HepG2 (cell line): ENCODE measurements at regions of chr16 and their contacts with region 1.

Region 1: DNA sequence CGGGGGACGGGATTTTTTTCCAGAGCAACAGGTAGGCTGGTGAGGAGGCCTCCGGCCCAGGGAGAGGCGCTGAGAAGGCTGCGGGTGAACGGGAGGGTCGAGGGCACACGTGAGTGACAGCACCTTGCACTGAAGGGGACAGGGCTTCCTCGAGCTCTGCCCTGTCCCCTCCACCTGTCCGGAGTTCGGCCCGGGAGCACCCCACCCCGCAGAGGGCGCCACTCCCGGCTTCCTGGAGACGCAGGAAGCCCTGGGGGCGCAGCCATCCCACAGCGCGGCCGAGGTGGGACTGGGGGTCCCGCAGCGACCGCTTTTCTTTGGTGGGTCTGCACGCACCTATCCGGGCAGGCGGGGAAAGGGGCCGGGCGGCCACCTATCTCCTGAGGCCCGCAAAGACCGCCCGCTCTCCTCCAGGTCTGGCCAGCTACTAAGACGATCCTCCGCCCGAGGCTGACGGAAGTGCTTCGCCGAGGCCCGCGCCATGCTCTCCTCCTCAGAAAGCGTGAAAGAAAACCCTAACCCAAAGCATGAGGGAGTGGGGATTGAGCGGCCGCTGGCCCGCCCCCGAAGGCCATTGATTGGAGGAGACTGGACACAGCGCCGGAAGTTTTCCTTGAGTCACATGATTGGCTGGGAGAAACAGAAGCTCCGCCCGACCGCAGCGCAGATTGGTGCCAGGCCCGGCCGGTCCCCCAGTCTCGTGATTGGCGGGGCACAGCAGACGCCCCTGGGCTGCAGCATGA is 34.3 kb downstream of the DDX19A start:
- DNase-seq: peak; percentile 98
- ATAC-seq: peak; percentile 91
- H3K4me3 ChIP-seq: peak overlapping the region; percentile 80 to 94 (median 85)
- H3K27ac ChIP-seq: peak overlapping the region; percentile 78
- H3K4me1 ChIP-seq: peaks cover 24% of the 10 kb centered on the region
- H3K27me3 ChIP-seq: no peaks in the 10 kb centered on the region; a peak in 1 of 5 replicates
- CTCF ChIP-seq: peak; percentile 73
- EP300 ChIP-seq: 0 out of 4 replicates have a peak, but pooled peaks of 1 of the 2 experiments have one; percentile 4
- POLR2A ChIP-seq: peak; percentile 92 to 95
- RAD21 ChIP-seq: peak; percentile 84

Region 2: GRCh38 chr16:70289229-70290098 is 91.6 kb before region 1 on chr16 and contains the start of gene AARS1:
- CTCF ChIA-PET with region 1: no interaction called
- POLR2A ChIA-PET with region 1: interaction called, 10 read pairs
- in situ Hi-C with region 1: no loop called
- intact Hi-C with region 1: no loop called
- DNase-seq: peak; percentile 100
- ATAC-seq: peak; percentile 99
- H3K4me3 ChIP-seq: peak within 1 kb of the TSS; percentile 90 to 100 (median 94)
- H3K27ac ChIP-seq: peak within 1 kb of the TSS; percentile 99
- H3K4me1 ChIP-seq: peaks cover 28% of the 10 kb centered on the region
- H3K27me3 ChIP-seq: no peaks in the 10 kb centered on the region; a peak in 1 of 5 replicates
- CTCF ChIP-seq: peak; percentile 16; the same call in 1 of the 2 replicates
- EP300 ChIP-seq: peak; percentile 50 to 63; a peak in 2 of 4 replicates
- POLR2A ChIP-seq: peak; percentile 98
- RAD21 ChIP-seq: peak; percentile 79
- total RNA-seq, gene AARS1: 107 and 132 TPM in 2 replicates

Region 3: GRCh38 chr16:70364399-70364798 is 16.6 kb before region 1 on chr16:
- CTCF ChIA-PET with region 1: no interaction called
- POLR2A ChIA-PET with region 1: interaction called, 14 read pairs
- in situ Hi-C with region 1: no loop called
- intact Hi-C with region 1: no loop called
- DNase-seq: no peak
- ATAC-seq: peak; percentile 23; the same call in 1 of the 3 replicates
- H3K4me3 ChIP-seq: no peak overlapping the region
- H3K27ac ChIP-seq: no peak overlapping the region
- H3K4me1 ChIP-seq: no peaks in the 10 kb centered on the region
- H3K27me3 ChIP-seq: no peaks in the 10 kb centered on the region
- CTCF ChIP-seq: no peak
- EP300 ChIP-seq: no peak
- POLR2A ChIP-seq: no peak
- RAD21 ChIP-seq: no peak

Region 4: GRCh38 chr16:70428178-70428998 is 47.4 kb after region 1 on chr16:
- CTCF ChIA-PET with region 1: no interaction called
- POLR2A ChIA-PET with region 1: interaction called, 47 read pairs
- in situ Hi-C with region 1: no loop called
- intact Hi-C with region 1: no loop called
- DNase-seq: peak; percentile 100
- ATAC-seq: peak; percentile 90
- H3K4me3 ChIP-seq: peak overlapping the region; percentile 15 to 64 (median 47)
- H3K27ac ChIP-seq: peak overlapping the region; percentile 96
- H3K4me1 ChIP-seq: peaks cover 90% of the 10 kb centered on the region
- H3K27me3 ChIP-seq: no peaks in the 10 kb centered on the region
- CTCF ChIP-seq: no peak
- EP300 ChIP-seq: peak; percentile 88 to 97
- POLR2A ChIP-seq: peak; percentile 74 to 75
- RAD21 ChIP-seq: peak; percentile 68

Region 5: DNA sequence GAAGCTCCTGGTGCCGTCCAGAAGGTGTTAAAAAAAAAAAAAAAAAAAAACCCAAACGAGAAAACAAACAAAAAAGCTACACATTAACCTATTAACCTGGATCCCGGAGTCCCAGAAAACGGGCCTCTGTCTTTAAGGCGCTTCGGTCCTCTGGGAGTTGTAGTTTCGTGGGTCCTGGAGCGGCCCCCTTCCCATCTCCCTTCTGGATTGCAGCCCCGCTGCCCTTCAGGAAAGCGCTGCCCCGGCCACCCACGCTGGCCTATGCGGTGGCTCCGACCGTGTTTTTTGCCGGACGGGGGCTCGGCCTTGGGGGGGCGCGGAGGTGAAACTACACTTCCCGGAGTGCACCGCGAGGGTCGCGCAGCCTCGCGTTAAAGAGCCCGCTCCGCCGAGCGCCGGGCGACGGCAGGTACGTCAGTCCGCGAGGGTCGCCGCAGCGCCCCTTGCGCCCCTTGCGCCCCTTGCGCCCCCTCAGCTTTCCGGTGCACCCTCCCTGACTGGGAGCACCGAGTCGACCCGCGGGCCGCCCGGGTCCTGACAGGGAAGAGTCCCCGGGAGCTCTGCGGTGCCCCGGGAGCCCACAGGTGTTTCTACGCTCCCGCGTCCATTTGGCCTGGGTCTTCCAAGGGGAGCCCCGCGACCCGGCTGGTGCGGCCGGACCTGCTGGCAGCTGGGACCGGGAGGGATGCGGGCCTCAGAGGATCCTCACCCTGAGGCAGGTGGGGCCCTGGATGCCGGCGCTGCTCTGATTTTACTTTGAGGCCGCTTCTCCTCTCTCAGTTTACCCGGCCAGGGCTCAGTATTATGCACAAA is 73.4 kb after region 1 on chr16 and contains the start of gene FCSK:
- CTCF ChIA-PET with region 1: interaction called, 3 read pairs
- POLR2A ChIA-PET with region 1: interaction called, 96 read pairs
- in situ Hi-C with region 1: no loop called
- intact Hi-C with region 1: loop called (anchors 5 kb)
- DNase-seq: peak; percentile 88
- ATAC-seq: peak; percentile 93
- H3K4me3 ChIP-seq: peak within 1 kb of the TSS; percentile 88 to 90 (median 89)
- H3K27ac ChIP-seq: peak within 1 kb of the TSS; percentile 97
- H3K4me1 ChIP-seq: peaks cover 45% of the 10 kb centered on the region
- H3K27me3 ChIP-seq: no peaks in the 10 kb centered on the region; a peak in 1 of 5 replicates
- CTCF ChIP-seq: peak; percentile 73
- EP300 ChIP-seq: peak in 1 of 2 experiments; percentile 70; a peak in 1 of 4 replicates
- POLR2A ChIP-seq: peak in 1 of 2 experiments; percentile 82; a peak in 3 of 4 replicates
- RAD21 ChIP-seq: peak; percentile 81
- total RNA-seq, gene FCSK: 4.9 and 9.1 TPM in 2 replicates

Region 6: DNA sequence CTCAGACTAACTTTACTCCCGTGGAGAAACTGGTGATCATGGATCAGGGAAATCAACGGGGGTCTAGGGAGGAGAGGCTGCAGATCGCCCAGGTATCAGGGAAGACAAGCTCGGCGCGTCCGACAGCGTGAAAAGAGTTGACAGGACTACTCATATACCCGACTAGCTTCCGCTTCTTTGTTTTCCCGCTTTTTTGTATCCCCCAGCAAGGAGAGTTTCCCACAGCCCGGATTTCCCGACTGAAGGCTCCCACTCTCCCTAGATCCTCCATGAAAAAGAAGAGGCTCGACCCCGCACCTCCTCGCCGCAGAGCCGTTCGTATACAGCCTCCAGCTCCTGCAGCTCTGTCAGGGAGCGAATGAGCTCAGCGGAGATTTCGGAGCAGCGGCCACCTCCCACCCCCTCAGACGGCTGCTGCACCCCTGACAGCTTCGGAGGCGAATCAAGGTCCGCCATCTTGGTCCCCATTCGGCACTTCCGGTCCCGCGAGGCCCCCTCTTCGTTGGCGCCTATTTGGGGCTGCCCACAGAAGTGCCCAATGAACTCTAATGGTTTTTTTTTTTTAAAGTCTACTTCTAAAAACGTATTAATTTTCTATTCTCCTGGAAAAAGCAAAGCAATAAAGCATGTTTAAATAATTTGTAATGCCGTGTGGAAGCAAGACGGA is 142.2 kb after region 1 on chr16 and contains the start of gene COG4:
- CTCF ChIA-PET with region 1: no interaction called
- POLR2A ChIA-PET with region 1: interaction called, 24 read pairs
- in situ Hi-C with region 1: no loop called
- intact Hi-C with region 1: no loop called
- DNase-seq: peak; percentile 83
- ATAC-seq: peak; percentile 85
- H3K4me3 ChIP-seq: peak within 1 kb of the TSS; percentile 98 to 99 (median 99)
- H3K27ac ChIP-seq: peak within 1 kb of the TSS; percentile 93
- H3K4me1 ChIP-seq: peaks cover 40% of the 10 kb centered on the region
- H3K27me3 ChIP-seq: peaks cover 0 to 5% of the 10 kb centered on the region in 2 experiments; a peak in 1 of 5 replicates
- CTCF ChIP-seq: no peak
- EP300 ChIP-seq: peak in 1 of 2 experiments; percentile 3; a peak in 1 of 4 replicates
- POLR2A ChIP-seq: peak; percentile 73 to 94
- RAD21 ChIP-seq: no peak
- total RNA-seq, gene COG4: 73.8 and 85.7 TPM in 2 replicates

Region 7: DNA sequence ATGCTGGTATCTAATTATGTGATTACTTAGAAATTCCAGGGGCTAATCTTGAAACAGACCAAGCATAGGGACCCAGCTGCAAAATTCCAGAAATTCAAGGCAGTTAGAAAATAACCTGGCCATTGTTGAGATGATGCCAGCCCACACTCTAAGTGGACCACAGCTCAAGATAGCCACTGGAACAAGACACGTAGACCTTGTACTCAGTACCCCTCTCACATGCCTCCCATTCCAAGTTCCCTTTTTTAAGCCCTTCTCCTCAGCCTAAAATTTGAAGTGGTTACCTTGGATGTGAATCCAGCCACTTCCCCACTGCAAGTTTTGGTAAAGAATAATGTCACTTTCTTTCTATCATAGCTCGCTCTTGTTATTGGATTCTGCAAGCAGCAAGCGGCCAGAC is 1112.2 kb after region 1 on chr16:
- CTCF ChIA-PET with region 1: no interaction called
- POLR2A ChIA-PET with region 1: no interaction called
- in situ Hi-C with region 1: no loop called
- intact Hi-C with region 1: no loop called
- DNase-seq: no peak
- ATAC-seq: no peak
- H3K4me3 ChIP-seq: no peak overlapping the region
- H3K27ac ChIP-seq: no peak overlapping the region
- H3K4me1 ChIP-seq: no peaks in the 10 kb centered on the region
- H3K27me3 ChIP-seq: peaks cover 0 to 4% of the 10 kb centered on the region in 2 experiments; a peak in 2 of 5 replicates
- CTCF ChIP-seq: no peak
- EP300 ChIP-seq: no peak
- POLR2A ChIP-seq: no peak
- RAD21 ChIP-seq: no peak

Region 8: DNA sequence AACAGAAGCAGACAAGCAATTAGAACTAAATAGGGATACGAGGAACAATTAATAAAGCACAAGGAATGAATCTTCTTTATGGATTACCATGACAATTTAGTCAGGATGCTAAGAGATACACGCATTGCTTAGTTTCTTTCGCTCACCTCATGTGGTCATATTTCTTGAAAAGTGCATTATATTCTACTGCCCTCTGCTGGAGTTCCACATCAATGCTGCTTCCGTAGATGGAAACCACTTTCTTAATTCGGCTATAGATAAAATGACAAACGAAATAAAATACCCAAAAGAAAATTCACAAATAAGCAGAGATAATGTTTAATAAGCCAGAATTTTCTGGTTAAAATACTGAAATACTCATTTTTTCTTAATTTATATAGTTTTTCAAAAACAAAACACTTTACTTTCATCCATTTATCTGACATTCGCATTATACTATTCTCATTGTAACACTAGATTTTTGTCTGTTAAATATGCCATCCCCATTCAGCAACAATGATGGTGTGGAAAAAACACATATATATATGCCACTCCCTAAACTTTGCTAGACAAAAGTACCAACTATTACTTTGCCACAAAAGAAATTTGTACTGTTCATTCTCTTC is 1365.5 kb after region 1 on chr16:
- CTCF ChIA-PET with region 1: no interaction called
- POLR2A ChIA-PET with region 1: no interaction called
- in situ Hi-C with region 1: no loop called
- intact Hi-C with region 1: no loop called
- DNase-seq: peak; percentile 51
- ATAC-seq: no peak
- H3K4me3 ChIP-seq: no peak overlapping the region
- H3K27ac ChIP-seq: no peak overlapping the region
- H3K4me1 ChIP-seq: no peaks in the 10 kb centered on the region
- H3K27me3 ChIP-seq: no peaks in the 10 kb centered on the region
- CTCF ChIP-seq: peak; percentile 73
- EP300 ChIP-seq: no peak
- POLR2A ChIP-seq: no peak
- RAD21 ChIP-seq: peak; percentile 32; the same call in 1 of the 2 replicates